Right cardiac atrium (tissue), 5 donors: ENCODE measurements at regions of chr14 and their contacts with region 1.

Region 1: GRCh38 chr14:22852940-22853767 is 16.8 kb downstream of the MMP14 start:
- DNase-seq: peak; percentile 85 to 96 (median 96)
- ATAC-seq: peak; percentile 46 to 58
- H3K4me3 ChIP-seq: peak overlapping the region; percentile 46
- H3K27ac ChIP-seq: no peak overlapping the region
- H3K4me1 ChIP-seq: peaks cover 21% of the 10 kb centered on the region
- H3K27me3 ChIP-seq: no peaks in the 10 kb centered on the region

Region 2: DNA sequence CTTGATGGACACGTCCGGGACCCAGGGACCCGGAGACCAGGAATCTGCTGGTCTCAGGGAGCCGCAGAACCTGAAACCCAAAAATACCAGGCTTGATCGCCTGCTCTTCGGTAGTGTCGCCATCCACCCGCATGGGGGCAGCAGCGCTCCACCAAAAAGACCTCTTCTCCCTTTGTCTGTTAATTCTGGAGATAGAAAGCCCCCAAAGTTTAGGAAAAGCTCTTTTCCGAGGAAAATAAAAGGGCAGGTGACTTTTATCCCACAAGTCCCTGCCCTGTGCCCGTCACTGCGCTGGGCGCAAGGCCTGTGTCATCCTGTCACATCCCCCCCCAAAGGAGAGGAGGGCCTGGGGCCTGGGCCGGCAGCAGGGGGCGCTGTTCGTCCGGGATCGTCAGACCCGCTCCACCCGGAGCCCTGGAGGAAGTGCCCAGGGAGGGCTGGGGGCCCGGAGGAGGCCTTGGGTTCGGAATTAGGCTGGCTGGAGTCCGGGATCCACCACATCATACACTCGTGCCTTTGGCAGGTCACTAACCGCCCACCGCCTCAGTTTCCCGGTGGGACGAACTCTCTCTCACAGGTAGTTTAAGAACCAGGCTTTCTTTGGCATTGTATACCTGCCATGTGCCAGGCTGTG is 296.0 kb before region 1 on chr14:
- intact Hi-C with region 1: loop called in 2 of 4 experiments (anchors 5 to 10 kb)
- DNase-seq: peak; percentile 89 to 95 (median 92)
- ATAC-seq: peak; percentile 85 to 87
- H3K4me3 ChIP-seq: peak overlapping the region; percentile 26
- H3K27ac ChIP-seq: no peak overlapping the region
- H3K4me1 ChIP-seq: peaks cover 2% of the 10 kb centered on the region
- H3K27me3 ChIP-seq: no peaks in the 10 kb centered on the region

Region 3: GRCh38 chr14:22822571-22823098 is 30.5 kb before region 1 on chr14:
- intact Hi-C with region 1: loop called (anchors 1 to 2 kb)
- DNase-seq: peak; percentile 82 to 92 (median 90)
- ATAC-seq: peak; percentile 85 to 89
- H3K4me3 ChIP-seq: peak overlapping the region; percentile 48
- H3K27ac ChIP-seq: no peak overlapping the region
- H3K4me1 ChIP-seq: no peaks in the 10 kb centered on the region
- H3K27me3 ChIP-seq: no peaks in the 10 kb centered on the region

Region 4: DNA sequence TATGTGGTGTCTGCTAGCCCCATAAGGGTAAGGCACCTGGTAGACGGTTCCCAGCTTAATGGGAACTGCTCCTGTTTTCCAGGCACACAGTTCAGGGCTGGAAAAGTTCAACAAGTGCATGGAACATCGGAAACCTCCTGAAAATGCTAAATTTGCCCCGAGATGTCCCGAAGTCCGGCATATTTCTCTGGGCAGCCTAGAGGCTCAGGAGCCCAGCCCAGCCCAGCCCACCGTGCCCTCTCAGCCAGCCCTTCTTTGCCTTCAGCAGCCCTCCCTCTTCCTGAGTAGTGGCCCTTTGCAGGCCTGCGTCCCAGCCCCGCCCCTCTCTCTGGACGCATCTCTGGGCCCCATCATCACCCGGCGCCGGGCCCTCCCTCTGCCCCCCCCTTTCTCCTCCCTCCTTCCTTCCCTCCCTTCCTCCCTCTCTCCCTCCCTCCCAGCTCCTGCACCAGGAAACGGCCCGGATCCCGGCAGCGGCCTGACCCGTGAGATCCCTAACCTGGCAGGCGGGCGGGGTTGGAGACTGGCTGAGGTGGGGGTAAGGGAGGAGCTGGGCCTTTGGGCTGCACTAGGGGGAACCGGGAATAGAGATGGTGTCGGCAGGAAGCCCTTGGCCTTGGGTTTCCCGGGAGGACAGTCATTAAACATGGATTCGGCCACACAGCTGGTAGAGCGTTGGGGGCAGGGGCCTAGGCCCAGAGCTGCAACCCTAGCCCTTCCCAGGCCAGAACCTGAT is 453.4 kb after region 1 on chr14 and contains the start of gene BCL2L2:
- intact Hi-C with region 1: no loop called
- DNase-seq: peak; percentile 94 to 98 (median 97)
- ATAC-seq: peak; percentile 79
- H3K4me3 ChIP-seq: peak within 1 kb of the TSS; percentile 79
- H3K27ac ChIP-seq: peak within 1 kb of the TSS; percentile 95
- H3K4me1 ChIP-seq: peaks cover 6% of the 10 kb centered on the region
- H3K27me3 ChIP-seq: no peaks in the 10 kb centered on the region
- total RNA-seq, gene BCL2L2: 40.4 to 51.9 (median 48.8) TPM